MCF 10A (cell line): ENCODE measurements at regions of chr3 and their contacts with region 1.

Region 1: GRCh38 chr3:154334973-154335420 is 10.7 kb upstream of the DHX36 start:
- DNase-seq: peak; percentile 50
- H3K4me3 Mint-ChIP-seq: no peak overlapping the region
- H3K27ac Mint-ChIP-seq: no peak overlapping the region
- H3K4me1 Mint-ChIP-seq: no peaks in the 10 kb centered on the region
- H3K27me3 Mint-ChIP-seq: no peaks in the 10 kb centered on the region
- CTCF ChIP-seq: peak; percentile 36

Region 2: GRCh38 chr3:154730186-154730585 is 395.2 kb after region 1 on chr3:
- CTCF ChIA-PET with region 1: interaction called, 9 read pairs
- POLR2A ChIA-PET with region 1: no interaction called
- intact Hi-C with region 1: loop called (anchors 1 kb)
- DNase-seq: peak; percentile 15
- H3K4me3 Mint-ChIP-seq: no peak overlapping the region
- H3K27ac Mint-ChIP-seq: no peak overlapping the region
- H3K4me1 Mint-ChIP-seq: no peaks in the 10 kb centered on the region
- H3K27me3 Mint-ChIP-seq: no peaks in the 10 kb centered on the region
- CTCF ChIP-seq: peak; percentile 27

Region 3: DNA sequence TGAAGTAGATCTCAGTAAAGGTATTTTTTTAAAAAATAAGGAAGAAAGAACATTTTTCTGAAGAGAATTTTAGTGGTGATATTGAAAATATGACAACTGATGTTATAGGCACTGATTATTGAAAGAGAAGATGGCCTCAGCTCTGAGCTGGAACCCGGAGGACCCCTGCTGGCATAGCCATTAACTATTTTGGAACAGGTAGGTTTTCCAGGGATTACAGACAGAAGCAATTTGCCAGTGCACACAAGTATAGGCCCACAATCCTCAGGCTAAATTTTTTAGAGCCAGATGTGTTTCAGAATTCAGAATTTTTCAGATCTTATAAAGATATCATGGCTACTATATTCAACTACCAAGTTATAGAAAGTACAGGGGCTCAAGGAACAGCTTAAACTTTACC is 411.0 kb after region 1 on chr3:
- CTCF ChIA-PET with region 1: interaction called, 4 read pairs
- POLR2A ChIA-PET with region 1: no interaction called
- intact Hi-C with region 1: loop called (anchors 1 kb)
- DNase-seq: peak; percentile 26
- H3K4me3 Mint-ChIP-seq: no peak overlapping the region
- H3K27ac Mint-ChIP-seq: no peak overlapping the region
- H3K4me1 Mint-ChIP-seq: no peaks in the 10 kb centered on the region
- H3K27me3 Mint-ChIP-seq: no peaks in the 10 kb centered on the region
- CTCF ChIP-seq: peak; percentile 36